PC-9 (cell line): ENCODE measurements at regions of chr17 and their contacts with region 1.

Region 1: GRCh38 chr17:75473246-75473645 is 16.8 kb downstream of the TMEM94 start:
- DNase-seq: no peak
- H3K4me3 ChIP-seq: no peak overlapping the region
- H3K27ac ChIP-seq: no peak overlapping the region
- H3K4me1 ChIP-seq: no peaks in the 10 kb centered on the region
- H3K27me3 ChIP-seq: no peaks in the 10 kb centered on the region
- CTCF ChIP-seq: no peak

Region 2: DNA sequence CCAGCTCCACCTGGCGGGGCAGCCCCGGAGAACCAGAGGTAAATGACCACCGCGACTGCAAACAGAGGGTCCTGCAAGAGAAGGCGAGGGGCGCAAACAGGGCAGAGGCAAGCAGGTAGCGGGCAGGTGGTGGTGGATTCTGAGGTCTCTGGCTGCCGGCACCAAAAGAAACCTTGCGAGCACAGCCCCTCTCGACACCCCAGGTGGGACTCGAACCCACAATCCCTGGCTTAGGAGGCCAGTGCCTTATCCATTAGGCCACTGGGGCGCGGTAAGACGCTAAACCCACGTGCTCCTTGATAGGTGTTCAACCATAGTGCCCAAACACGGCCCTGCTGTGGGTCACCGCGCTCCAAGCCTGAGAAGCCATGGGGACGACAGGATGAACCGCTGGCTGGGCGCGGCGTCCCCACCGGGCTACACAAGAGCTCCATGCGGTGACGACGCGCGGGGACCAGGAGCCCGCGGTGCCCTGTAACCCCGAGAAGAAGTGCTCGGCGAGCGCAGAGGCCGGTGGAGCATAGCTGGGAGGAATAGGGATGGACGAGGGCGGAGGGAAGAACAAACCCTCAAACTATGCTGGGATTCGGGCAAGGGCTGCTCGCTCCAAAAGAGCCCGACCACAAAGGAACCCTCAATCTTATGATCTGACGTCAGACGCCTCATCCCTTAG is 438.9 kb before region 1 on chr17:
- CTCF ChIA-PET with region 1: no interaction called
- POLR2A ChIA-PET with region 1: no interaction called
- intact Hi-C with region 1: no loop called
- DNase-seq: peak; percentile 88
- H3K4me3 ChIP-seq: peak overlapping the region; percentile 98
- H3K27ac ChIP-seq: peak overlapping the region; percentile 90
- H3K4me1 ChIP-seq: peaks cover 30% of the 10 kb centered on the region
- H3K27me3 ChIP-seq: no peaks in the 10 kb centered on the region
- CTCF ChIP-seq: peak; percentile 45; the same call in 1 of the 2 replicates

Region 3: DNA sequence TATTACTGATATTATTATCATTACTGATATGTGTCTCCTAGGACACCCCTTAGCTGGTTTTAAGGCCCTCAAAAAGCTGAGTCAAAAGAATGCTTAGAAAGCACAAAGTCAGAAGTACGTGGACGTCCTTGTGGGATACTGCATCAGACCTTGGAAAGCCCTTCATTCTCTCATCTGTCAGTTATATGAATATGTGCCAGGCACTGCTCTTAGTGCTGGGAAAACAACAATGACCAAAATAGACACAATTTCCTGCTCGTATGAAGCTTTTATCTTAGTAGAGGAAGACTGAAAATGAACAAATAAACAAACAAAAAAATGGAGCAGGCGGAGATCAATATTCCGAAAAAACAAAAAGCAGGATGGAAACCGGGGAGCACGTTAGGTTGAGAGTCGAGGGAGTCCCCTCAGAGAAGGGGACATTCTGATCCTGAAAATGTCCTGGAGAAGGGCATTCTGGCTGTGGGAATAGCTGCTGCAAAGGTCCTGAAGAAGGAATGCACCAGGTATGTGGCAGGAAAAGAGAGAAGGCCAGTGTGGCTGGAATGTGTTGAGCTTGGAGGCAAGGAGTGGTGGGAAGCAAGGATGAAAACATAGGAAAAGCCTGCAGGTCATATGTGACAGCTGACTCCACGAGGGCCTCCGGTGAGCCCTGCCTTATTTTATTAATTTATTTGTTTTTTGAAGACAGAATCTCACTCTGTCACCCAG is 32.4 kb before region 1 on chr17:
- CTCF ChIA-PET with region 1: no interaction called
- POLR2A ChIA-PET with region 1: interaction called, 13 read pairs
- intact Hi-C with region 1: no loop called
- DNase-seq: no peak
- H3K4me3 ChIP-seq: no peak overlapping the region
- H3K27ac ChIP-seq: no peak overlapping the region
- H3K4me1 ChIP-seq: peaks cover 15% of the 10 kb centered on the region
- H3K27me3 ChIP-seq: no peaks in the 10 kb centered on the region
- CTCF ChIP-seq: no peak

Region 4: DNA sequence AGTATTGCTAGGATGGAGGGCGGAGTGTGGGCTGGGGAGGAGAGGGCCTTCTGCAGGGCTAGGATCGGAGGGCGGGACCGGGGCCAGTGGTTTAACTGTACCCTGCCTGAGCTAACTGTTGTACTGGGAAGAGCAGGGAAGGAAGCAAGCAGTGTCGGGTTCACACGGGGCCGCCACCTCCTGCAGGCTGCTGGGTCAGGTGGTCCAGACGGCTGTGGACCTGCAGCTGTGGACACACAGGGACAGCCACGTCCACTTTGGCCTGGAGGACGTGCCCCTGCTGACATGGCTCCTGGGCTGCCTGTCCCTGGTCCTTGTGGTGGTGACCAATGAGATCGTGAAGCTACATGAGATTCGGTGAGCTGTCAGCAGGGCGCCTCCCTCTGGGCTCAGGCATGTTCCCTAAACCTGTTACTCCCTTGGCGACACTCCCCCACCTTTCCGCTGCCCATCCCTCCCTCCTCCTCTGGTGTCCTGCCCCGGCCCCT is 25.5 kb after region 1 on chr17:
- CTCF ChIA-PET with region 1: no interaction called
- POLR2A ChIA-PET with region 1: interaction called, 13 read pairs
- intact Hi-C with region 1: no loop called
- DNase-seq: no peak
- H3K4me3 ChIP-seq: no peak overlapping the region
- H3K27ac ChIP-seq: no peak overlapping the region
- H3K4me1 ChIP-seq: no peaks in the 10 kb centered on the region
- H3K27me3 ChIP-seq: no peaks in the 10 kb centered on the region
- CTCF ChIP-seq: no peak

Region 5: DNA sequence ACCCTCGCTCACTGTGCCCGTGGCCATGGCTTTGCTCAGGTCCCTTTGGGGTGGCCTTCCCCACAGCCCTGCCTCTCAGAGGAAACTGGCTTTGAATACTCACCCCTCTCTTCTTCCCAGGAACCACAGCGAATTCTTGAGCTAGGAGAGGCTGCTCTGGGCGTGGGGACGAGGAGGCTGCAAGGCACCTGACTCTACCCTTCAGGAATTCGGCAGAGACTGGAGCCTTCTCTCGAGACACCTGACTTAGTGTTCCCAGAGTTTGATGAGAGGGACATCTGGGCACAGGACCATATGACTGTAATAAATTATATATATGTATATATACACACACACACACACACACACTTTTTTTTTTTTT is 58.5 kb after region 1 on chr17:
- CTCF ChIA-PET with region 1: no interaction called
- POLR2A ChIA-PET with region 1: interaction called, 22 read pairs
- intact Hi-C with region 1: no loop called
- DNase-seq: peak; percentile 87 to 92
- H3K4me3 ChIP-seq: no peak overlapping the region
- H3K27ac ChIP-seq: peak overlapping the region; percentile 89
- H3K4me1 ChIP-seq: peaks cover 32% of the 10 kb centered on the region
- H3K27me3 ChIP-seq: no peaks in the 10 kb centered on the region
- CTCF ChIP-seq: no peak